B cell (primary cell): ENCODE measurements at regions of chr1 and their contacts with region 1.

Region 1: GRCh38 chr1:156659994-156660751 is 17.0 kb downstream of the NES start:
- DNase-seq: peak; percentile 92
- ATAC-seq: peak; percentile 83
- H3K4me3 ChIP-seq: no peak overlapping the region
- H3K4me3 Mint-ChIP-seq: peak overlapping the region; percentile 66
- H3K27ac ChIP-seq: no peak overlapping the region
- H3K27ac Mint-ChIP-seq: peak overlapping the region; percentile 69
- H3K4me1 ChIP-seq: peaks cover 78 to 89% of the 10 kb centered on the region in 2 donors
- H3K4me1 Mint-ChIP-seq: peaks cover 91% of the 10 kb centered on the region
- H3K27me3 ChIP-seq: peaks cover 0 to 30% (median 11%) of the 10 kb centered on the region in 4 experiments
- H3K27me3 Mint-ChIP-seq: peaks cover 25% of the 10 kb centered on the region
- CTCF ChIP-seq: peak; percentile 99

Region 2: DNA sequence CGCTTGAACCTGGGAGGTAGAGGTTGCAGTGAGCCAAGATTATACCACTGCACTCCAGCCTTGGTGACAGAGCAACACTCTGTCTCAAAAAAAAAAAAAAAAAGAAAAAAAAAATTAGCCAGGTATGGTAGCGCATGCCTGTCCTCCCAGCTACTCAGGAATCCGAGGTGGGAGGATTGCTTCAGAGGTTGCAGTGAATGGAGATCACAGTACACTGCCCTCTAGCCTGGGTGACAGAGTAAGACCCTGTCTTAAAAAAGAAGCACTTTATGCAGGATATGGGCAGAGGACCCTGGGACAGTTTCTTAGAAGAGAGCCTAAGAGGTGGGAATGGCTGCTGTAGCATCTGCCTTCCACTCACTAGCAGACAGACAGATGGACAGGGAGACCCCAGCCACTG is 110.8 kb before region 1 on chr1:
- CTCF ChIA-PET with region 1: no interaction called
- POLR2A ChIA-PET with region 1: no interaction called
- intact Hi-C with region 1: no loop called
- DNase-seq: no peak
- ATAC-seq: no peak
- H3K4me3 ChIP-seq: no peak overlapping the region
- H3K4me3 Mint-ChIP-seq: no peak overlapping the region
- H3K27ac ChIP-seq: no peak overlapping the region
- H3K27ac Mint-ChIP-seq: no peak overlapping the region
- H3K4me1 ChIP-seq: peaks cover 38 to 40% of the 10 kb centered on the region in 2 donors
- H3K4me1 Mint-ChIP-seq: peaks cover 39% of the 10 kb centered on the region
- H3K27me3 ChIP-seq: no peaks in the 10 kb centered on the region
- H3K27me3 Mint-ChIP-seq: no peaks in the 10 kb centered on the region
- CTCF ChIP-seq: no peak

Region 3: DNA sequence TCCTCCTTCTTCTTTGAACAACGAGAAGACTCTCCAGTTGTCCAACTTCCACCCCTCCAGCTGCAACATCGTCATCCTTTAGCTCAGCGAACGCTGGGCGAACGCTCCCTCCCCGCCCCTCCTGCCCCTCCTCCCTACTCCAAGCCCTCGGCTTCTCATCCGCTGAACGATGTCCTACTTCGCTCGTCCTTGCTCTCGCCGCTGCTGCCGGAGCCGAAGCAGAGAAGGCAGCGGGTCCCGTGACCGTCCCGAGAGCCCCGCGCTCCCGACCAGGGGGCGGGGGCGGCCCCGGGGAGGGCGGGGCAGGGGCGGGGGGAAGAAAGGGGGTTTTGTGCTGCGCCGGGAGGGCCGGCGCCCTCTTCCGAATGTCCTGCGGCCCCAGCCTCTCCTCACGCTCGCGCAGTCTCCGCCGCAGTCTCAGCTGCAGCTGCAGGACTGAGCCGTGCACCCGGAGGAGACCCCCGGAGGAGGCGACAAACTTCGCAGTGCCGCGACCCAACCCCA is 18.4 kb before region 1 on chr1 and contains the start of gene BCAN:
- CTCF ChIA-PET with region 1: interaction called, 5 read pairs
- POLR2A ChIA-PET with region 1: no interaction called
- intact Hi-C with region 1: loop called (anchors 2 kb)
- DNase-seq: peak; percentile 55
- ATAC-seq: peak; percentile 48
- H3K4me3 ChIP-seq: peak within 1 kb of the TSS in 4 of 5 experiments; percentile 2 to 50 (median 26)
- H3K4me3 Mint-ChIP-seq: peak within 1 kb of the TSS; percentile 80
- H3K27ac ChIP-seq: no peak within 1 kb of the TSS
- H3K27ac Mint-ChIP-seq: no peak within 1 kb of the TSS
- H3K4me1 ChIP-seq: peaks cover 24 to 28% of the 10 kb centered on the region in 2 donors
- H3K4me1 Mint-ChIP-seq: peaks cover 23% of the 10 kb centered on the region
- H3K27me3 ChIP-seq: peaks cover 0 to 80% (median 55%) of the 10 kb centered on the region in 4 experiments
- H3K27me3 Mint-ChIP-seq: peaks cover 79% of the 10 kb centered on the region
- CTCF ChIP-seq: no peak
- total RNA-seq, gene BCAN: not detected in 2 replicates

Region 4: DNA sequence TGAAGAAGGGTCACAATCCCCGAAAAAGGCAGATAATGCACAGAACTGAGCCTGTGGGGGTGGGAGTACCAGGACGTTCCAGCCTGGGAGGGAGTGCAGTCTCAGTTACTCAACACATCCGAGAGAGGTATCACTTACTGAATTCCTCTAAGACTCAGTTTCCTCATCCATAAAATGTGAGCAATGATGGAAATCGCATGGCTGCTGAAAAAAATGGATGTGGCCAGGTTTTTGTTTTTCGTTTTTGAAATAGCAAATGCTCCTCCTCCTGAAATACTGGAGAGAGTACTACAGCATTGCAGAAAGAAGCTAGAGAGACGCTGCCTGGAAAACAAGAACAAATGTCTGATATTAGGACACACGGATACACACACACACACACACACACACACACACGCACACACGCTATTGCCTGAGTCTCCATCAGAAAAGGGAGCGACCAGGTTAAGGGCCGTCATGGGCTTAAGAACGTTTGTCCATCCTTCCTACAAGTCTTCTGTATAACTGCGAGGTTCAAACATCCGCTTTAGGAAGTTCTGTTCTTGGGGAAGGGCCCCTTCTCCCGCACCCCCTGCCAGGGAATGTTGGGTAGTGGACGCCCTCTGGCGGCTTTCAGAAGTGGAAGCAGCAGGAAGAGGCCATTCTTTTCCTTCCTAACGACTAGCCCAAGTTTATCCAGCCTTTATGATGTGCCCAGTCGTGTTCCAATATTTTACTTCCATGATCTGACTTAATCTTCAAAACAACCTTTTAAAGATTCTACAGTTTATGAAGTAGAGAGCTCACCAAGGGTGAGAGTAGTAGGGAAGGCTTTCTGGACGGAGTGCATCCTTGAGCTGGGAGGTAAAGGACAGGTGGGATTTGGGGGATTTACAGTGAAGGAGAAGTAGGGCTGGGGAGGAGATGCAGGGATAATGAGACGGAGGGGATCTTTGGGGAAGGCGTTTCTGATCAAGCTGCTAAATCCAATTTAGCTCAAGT is 17.7 kb after region 1 on chr1:
- CTCF ChIA-PET with region 1: interaction called, 102 read pairs
- POLR2A ChIA-PET with region 1: no interaction called
- intact Hi-C with region 1: loop called (anchors 1 kb)
- DNase-seq: peak; percentile 78
- ATAC-seq: no peak
- H3K4me3 ChIP-seq: peak overlapping the region in 1 of 5 experiments; percentile 24
- H3K4me3 Mint-ChIP-seq: peak overlapping the region; percentile 53
- H3K27ac ChIP-seq: no peak overlapping the region
- H3K27ac Mint-ChIP-seq: peak overlapping the region; percentile 57
- H3K4me1 ChIP-seq: peaks cover 25 to 32% of the 10 kb centered on the region in 2 donors
- H3K4me1 Mint-ChIP-seq: peaks cover 25% of the 10 kb centered on the region
- H3K27me3 ChIP-seq: peaks cover 0 to 83% (median 47%) of the 10 kb centered on the region in 4 experiments
- H3K27me3 Mint-ChIP-seq: peaks cover 52% of the 10 kb centered on the region
- CTCF ChIP-seq: peak; percentile 67

Region 5: DNA sequence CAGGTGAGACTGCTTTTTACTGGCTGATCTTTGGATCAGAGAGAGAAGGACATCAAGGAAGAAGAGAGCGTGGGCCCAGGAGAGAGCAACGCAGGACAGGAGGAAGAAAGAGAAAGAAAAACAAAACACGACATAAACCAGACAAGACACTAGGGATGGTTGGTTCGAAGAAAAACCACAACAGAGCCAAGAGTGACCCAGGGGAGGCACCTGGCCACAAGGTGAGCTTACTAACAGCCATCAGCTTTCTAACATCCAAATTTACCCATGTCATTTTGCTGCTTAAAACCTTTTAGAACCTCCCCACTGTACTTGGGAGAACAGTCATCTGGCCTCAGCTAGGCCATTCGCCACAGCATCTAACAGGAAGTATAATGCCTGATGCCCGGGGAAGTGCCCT is 327.5 kb after region 1 on chr1:
- CTCF ChIA-PET with region 1: no interaction called
- POLR2A ChIA-PET with region 1: no interaction called
- intact Hi-C with region 1: no loop called
- DNase-seq: no peak
- ATAC-seq: no peak
- H3K4me3 ChIP-seq: no peak overlapping the region
- H3K4me3 Mint-ChIP-seq: no peak overlapping the region
- H3K27ac ChIP-seq: no peak overlapping the region
- H3K27ac Mint-ChIP-seq: no peak overlapping the region
- H3K4me1 ChIP-seq: no peaks in the 10 kb centered on the region
- H3K4me1 Mint-ChIP-seq: no peaks in the 10 kb centered on the region
- H3K27me3 ChIP-seq: peaks cover 0 to 3% (median 0%) of the 10 kb centered on the region in 4 experiments
- H3K27me3 Mint-ChIP-seq: peaks cover 28% of the 10 kb centered on the region
- CTCF ChIP-seq: no peak